ENCODE measurements at regions of chr2 and their contacts with region 1.

Region 1: GRCh38 chr2:20326163-20326780 is 24.4 kb downstream of the PUM2 start:
- DNase-seq: no peak
- ATAC-seq: peak; percentile 94
- H3K4me3 ChIP-seq: no peak overlapping the region
- H3K27ac ChIP-seq: no peak overlapping the region
- H3K4me1 ChIP-seq: peaks cover 6% of the 10 kb centered on the region; the same call in 1 of the 2 replicates
- H3K27me3 ChIP-seq: no peaks in the 10 kb centered on the region
- CTCF ChIP-seq: peak; percentile 77 to 84 (median 82)
- EP300 ChIP-seq: no peak
- POLR2A ChIP-seq: no peak
- RAD21 ChIP-seq: peak; percentile 64

Region 2: DNA sequence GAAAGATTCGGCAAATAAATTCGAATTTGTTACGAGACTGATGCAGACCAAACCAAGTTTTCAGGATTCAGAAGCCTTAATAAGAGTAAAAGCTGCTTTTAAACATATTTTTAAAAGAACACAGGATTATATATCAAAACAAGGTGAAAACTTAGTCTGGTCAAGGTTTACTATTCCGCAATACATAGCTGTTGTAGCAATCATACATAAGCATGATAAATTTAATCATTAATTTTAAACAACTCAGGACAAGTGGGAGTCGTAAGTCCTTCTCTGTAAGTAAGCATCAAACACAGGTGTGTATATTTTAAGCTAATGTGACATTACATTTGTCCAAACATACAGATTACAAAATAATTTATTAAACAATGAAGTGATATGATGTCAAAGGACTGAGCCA is 33.3 kb before region 1 on chr2:
- CTCF ChIA-PET with region 1: interaction called, 12 read pairs
- POLR2A ChIA-PET with region 1: interaction called, 4 read pairs
- RAD21 ChIA-PET with region 1: interaction called, 3 read pairs
- SMC1A ChIA-PET with region 1: no interaction called
- in situ Hi-C with region 1: no loop called
- intact Hi-C with region 1: no loop called
- DNase-seq: no peak
- ATAC-seq: no peak
- H3K4me3 ChIP-seq: no peak overlapping the region
- H3K27ac ChIP-seq: no peak overlapping the region
- H3K4me1 ChIP-seq: no peaks in the 10 kb centered on the region
- H3K27me3 ChIP-seq: no peaks in the 10 kb centered on the region
- CTCF ChIP-seq: no peak
- EP300 ChIP-seq: no peak
- POLR2A ChIP-seq: no peak
- RAD21 ChIP-seq: no peak

Region 3: DNA sequence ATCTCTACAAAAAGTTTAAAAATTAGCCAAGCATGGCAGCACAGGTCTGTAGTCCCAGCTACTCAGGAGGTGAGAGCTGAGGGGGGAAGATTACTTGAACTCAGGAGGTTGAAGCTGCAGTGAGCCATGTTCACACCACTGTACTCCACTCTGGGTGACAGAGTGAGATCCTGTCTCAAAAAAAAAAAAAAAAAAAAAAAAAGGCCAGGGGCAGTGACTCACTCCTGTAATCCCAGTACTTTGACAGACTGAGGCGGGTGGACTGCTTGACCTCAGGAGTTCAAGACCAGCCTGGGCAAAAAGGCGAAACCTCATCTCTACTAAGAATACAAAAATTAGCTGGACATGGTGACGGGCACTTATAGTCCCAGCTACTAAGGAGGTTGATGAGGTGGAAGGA is 12.6 kb before region 1 on chr2:
- CTCF ChIA-PET with region 1: interaction called, 32 read pairs
- POLR2A ChIA-PET with region 1: no interaction called
- RAD21 ChIA-PET with region 1: interaction called, 4 read pairs
- SMC1A ChIA-PET with region 1: interaction called, 12 read pairs
- in situ Hi-C with region 1: no loop called
- intact Hi-C with region 1: no loop called
- DNase-seq: no peak
- ATAC-seq: no peak
- H3K4me3 ChIP-seq: no peak overlapping the region
- H3K27ac ChIP-seq: no peak overlapping the region
- H3K4me1 ChIP-seq: no peaks in the 10 kb centered on the region
- H3K27me3 ChIP-seq: no peaks in the 10 kb centered on the region
- CTCF ChIP-seq: no peak
- EP300 ChIP-seq: no peak
- POLR2A ChIP-seq: no peak
- RAD21 ChIP-seq: no peak

Region 4: DNA sequence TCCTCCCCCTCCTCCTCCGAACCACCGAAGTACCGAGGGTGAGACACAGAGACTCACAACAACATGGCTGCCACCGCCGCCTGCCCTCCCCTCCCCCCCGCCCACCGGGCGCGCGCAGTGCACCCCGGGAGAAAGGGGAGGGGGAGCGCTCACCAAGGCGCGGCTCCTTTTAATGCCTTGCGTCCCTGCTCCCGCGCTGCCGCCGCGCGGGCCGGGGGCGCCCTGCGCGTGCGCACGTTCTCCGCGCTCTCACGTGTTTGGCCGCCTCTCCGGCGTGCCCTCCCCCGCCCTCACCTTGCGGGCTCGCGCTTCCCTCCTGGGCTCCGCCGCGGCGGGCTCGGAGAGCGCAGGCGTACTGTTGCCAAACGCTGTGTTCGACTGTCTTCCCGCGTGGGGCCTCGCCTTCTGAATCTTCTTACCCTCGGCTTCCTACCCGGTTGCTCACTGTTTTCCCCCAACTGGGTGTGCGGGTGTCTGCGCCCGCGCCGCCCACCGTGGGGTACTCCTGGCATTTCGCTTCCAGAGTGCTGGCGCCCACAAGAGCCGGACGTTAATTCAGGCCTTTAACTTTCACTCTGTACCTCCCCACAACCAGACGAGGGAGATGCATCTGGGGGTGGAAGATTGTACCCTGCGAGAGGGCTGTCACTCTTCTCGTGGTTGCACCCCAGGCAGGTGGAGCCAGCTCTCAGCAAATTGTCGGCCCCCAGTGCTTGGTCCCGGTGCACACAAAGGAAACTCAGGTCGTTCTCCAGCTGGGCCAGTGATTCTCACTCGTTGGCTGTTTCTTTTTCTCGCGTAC is 24.7 kb after region 1 on chr2 and contains the start of gene PUM2:
- CTCF ChIA-PET with region 1: interaction called, 74 read pairs
- POLR2A ChIA-PET with region 1: interaction called, 24 read pairs
- RAD21 ChIA-PET with region 1: interaction called, 6 read pairs
- SMC1A ChIA-PET with region 1: interaction called, 48 read pairs
- in situ Hi-C with region 1: no loop called
- intact Hi-C with region 1: loop called (anchors 2 kb)
- DNase-seq: peak; percentile 92
- ATAC-seq: peak; percentile 86
- H3K4me3 ChIP-seq: peak within 1 kb of the TSS; percentile 77
- H3K27ac ChIP-seq: peak within 1 kb of the TSS; percentile 98
- H3K4me1 ChIP-seq: peaks cover 15% of the 10 kb centered on the region
- H3K27me3 ChIP-seq: no peaks in the 10 kb centered on the region
- CTCF ChIP-seq: no peak
- EP300 ChIP-seq: no peak
- POLR2A ChIP-seq: peak; percentile 94
- RAD21 ChIP-seq: 0 out of 2 replicates have a peak, but pooled peaks have one; percentile 0
- polyA plus RNA-seq, gene PUM2: 14.5 to 17.8 TPM